Mammary epithelial cell (primary cell): ENCODE measurements at regions of chr5 and their contacts with region 1.

Region 1: GRCh38 chr5:80679650-80680049 is 24.9 kb upstream of the DHFR start:
- DNase-seq: no peak
- H3K4me3 ChIP-seq: no peak overlapping the region
- H3K27ac ChIP-seq: no peak overlapping the region
- H3K4me1 ChIP-seq: no peaks in the 10 kb centered on the region
- H3K27me3 ChIP-seq: no peaks in the 10 kb centered on the region
- CTCF ChIP-seq: no peak

Region 2: GRCh38 chr5:80387063-80387768 is 292.4 kb before region 1 on chr5:
- CTCF ChIA-PET with region 1: no interaction called
- dilution Hi-C with region 1: no loop called
- in situ Hi-C with region 1: no loop called
- intact Hi-C with region 1: no loop called
- DNase-seq: no peak
- H3K4me3 ChIP-seq: no peak overlapping the region
- H3K27ac ChIP-seq: no peak overlapping the region
- H3K4me1 ChIP-seq: no peaks in the 10 kb centered on the region
- H3K27me3 ChIP-seq: no peaks in the 10 kb centered on the region
- CTCF ChIP-seq: no peak

Region 3: GRCh38 chr5:80474929-80475328 is 204.7 kb before region 1 on chr5:
- CTCF ChIA-PET with region 1: no interaction called
- dilution Hi-C with region 1: no loop called
- in situ Hi-C with region 1: loop called (anchors 5 kb)
- intact Hi-C with region 1: no loop called
- DNase-seq: no peak
- H3K4me3 ChIP-seq: no peak overlapping the region
- H3K27ac ChIP-seq: no peak overlapping the region
- H3K4me1 ChIP-seq: peaks cover 7% of the 10 kb centered on the region
- H3K27me3 ChIP-seq: no peaks in the 10 kb centered on the region
- CTCF ChIP-seq: no peak